CD4-positive, alpha-beta memory T cell (primary cell): ENCODE measurements at regions of chr7 and their contacts with region 1.

Region 1: GRCh38 chr7:2709553-2710285 is 21.7 kb downstream of the AMZ1 start:
- DNase-seq: peak; percentile 75 to 81 (median 79)
- H3K4me3 ChIP-seq: peak overlapping the region in 1 of 2 donors; percentile 50
- H3K4me3 Mint-ChIP-seq: peak overlapping the region; percentile 69 to 87 (median 78)
- H3K27ac ChIP-seq: peak overlapping the region; percentile 42
- H3K27ac Mint-ChIP-seq: peak overlapping the region in 6 of 7 donors; percentile 86 to 96 (median 90)
- H3K4me1 ChIP-seq: peaks cover 41% of the 10 kb centered on the region
- H3K4me1 Mint-ChIP-seq: peaks cover 19 to 40% (median 27%) of the 10 kb centered on the region in 4 donors
- H3K27me3 ChIP-seq: no peaks in the 10 kb centered on the region
- H3K27me3 Mint-ChIP-seq: no peaks in the 10 kb centered on the region

Region 2: DNA sequence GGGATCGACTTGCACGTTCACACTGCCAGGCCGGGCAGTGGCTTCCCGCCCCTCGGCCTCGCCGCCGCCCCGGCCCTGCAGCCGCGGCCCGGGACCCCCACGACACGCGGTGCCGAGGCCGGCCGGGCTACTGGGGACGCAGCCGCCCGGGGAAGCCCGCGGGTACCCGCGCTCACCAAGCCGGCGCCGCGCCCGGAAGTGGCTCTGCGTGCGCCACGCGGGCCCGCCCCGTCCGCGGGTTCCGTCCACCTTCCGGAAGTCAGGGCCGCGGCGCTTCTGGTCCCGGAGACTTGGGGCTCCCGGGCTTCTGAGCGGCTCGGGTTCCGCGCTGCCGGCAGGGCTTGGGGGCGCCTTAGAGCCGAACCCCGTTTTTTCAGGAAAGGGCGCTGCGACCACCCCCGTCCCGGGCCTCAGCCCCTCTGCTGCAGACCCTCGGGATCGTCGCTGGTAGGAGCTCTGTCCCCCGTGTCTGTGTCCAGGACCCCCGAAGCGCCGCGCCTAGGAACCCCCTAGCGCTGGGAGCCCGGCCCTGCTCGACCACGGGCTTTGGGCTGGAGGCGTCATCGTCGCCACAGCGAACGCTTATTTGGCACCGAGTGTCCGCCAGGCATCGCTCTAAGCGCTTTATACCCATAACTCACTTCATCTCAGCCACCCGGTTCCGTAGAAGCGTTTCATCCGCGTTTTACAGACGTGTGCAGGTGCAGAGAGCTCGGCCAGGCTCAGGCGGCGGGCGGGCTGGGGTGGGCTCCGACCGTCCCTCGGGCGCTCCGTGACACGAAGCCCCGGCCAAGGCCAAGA is 1139.7 kb before region 1 on chr7 and contains the start of gene PSMG3:
- CTCF ChIA-PET with region 1: no interaction called
- POLR2A ChIA-PET with region 1: no interaction called
- intact Hi-C with region 1: loop called (anchors 10 kb)
- DNase-seq: peak; percentile 83 to 87 (median 85)
- H3K4me3 ChIP-seq: peak within 1 kb of the TSS; percentile 60 to 76
- H3K4me3 Mint-ChIP-seq: peak within 1 kb of the TSS; percentile 86 to 91 (median 88)
- H3K27ac ChIP-seq: peak within 1 kb of the TSS; percentile 77
- H3K27ac Mint-ChIP-seq: peak within 1 kb of the TSS; percentile 87 to 97 (median 94)
- H3K4me1 ChIP-seq: peaks cover 20% of the 10 kb centered on the region
- H3K4me1 Mint-ChIP-seq: peaks cover 11 to 40% (median 21%) of the 10 kb centered on the region in 4 donors
- H3K27me3 ChIP-seq: no peaks in the 10 kb centered on the region
- H3K27me3 Mint-ChIP-seq: no peaks in the 10 kb centered on the region
- total RNA-seq, gene PSMG3: 19.3 to 22.2 TPM

Region 3: GRCh38 chr7:2508327-2509215 is 201.1 kb before region 1 on chr7:
- CTCF ChIA-PET with region 1: no interaction called
- POLR2A ChIA-PET with region 1: interaction called, 13 read pairs
- intact Hi-C with region 1: no loop called
- DNase-seq: peak; percentile 85 to 96 (median 90)
- H3K4me3 ChIP-seq: peak overlapping the region; percentile 31 to 39
- H3K4me3 Mint-ChIP-seq: peak overlapping the region; percentile 74 to 87 (median 81)
- H3K27ac ChIP-seq: peak overlapping the region; percentile 73
- H3K27ac Mint-ChIP-seq: peak overlapping the region; percentile 95 to 99 (median 98)
- H3K4me1 ChIP-seq: peaks cover 61% of the 10 kb centered on the region
- H3K4me1 Mint-ChIP-seq: peaks cover 29 to 63% (median 50%) of the 10 kb centered on the region in 4 donors
- H3K27me3 ChIP-seq: no peaks in the 10 kb centered on the region
- H3K27me3 Mint-ChIP-seq: no peaks in the 10 kb centered on the region

Region 4: DNA sequence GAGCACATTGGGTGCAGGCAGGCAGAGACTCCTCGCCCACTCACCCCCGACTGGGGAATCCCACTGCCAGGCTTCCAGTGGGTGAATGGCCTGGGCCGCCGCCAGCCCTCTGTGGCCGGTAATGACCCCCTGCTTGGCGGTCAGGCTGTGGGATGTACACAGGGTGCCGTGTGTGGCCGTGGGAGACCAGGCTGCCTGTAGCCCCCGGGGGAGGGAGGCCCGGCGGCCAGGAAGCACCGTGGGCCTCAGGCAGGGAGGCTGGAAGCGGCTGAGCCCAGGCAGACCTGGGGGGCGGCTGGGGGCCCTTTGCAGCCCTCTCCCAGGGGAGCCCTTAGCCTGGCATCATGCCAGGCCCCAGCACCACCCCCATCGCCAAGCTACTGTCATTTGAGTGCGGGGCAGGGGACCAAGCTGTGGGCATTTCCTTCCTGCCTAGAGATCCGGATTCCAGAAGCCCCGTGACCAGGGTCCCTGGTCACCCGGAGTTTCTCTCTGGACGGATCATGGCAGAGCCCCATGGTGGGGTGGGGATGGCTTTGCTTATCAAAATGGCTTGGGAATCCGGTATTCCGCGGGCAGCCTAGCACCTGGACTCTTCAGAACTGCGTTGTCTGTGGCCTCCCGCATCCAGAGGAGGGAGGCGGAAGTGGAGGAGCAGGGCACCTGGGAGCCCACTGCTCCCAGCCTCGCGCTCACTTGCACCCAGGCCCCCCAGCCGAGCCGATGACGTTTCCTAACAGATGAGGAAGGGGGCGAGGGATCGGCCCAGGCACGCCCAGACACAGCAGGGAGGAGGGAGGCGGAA is 76.8 kb before region 1 on chr7:
- CTCF ChIA-PET with region 1: interaction called, 3 read pairs
- POLR2A ChIA-PET with region 1: interaction called, 13 read pairs
- intact Hi-C with region 1: no loop called
- DNase-seq: peak in 4 of 5 donors; percentile 15 to 19 (median 18)
- H3K4me3 ChIP-seq: peak overlapping the region; percentile 52 to 82
- H3K4me3 Mint-ChIP-seq: peak overlapping the region; percentile 81 to 89 (median 84)
- H3K27ac ChIP-seq: peak overlapping the region; percentile 63
- H3K27ac Mint-ChIP-seq: peak overlapping the region; percentile 44 to 82 (median 75)
- H3K4me1 ChIP-seq: peaks cover 27% of the 10 kb centered on the region
- H3K4me1 Mint-ChIP-seq: peaks cover 2 to 21% (median 15%) of the 10 kb centered on the region in 4 donors
- H3K27me3 ChIP-seq: no peaks in the 10 kb centered on the region
- H3K27me3 Mint-ChIP-seq: peaks cover 0 to under 1% of the 10 kb centered on the region in 2 donors

Region 5: DNA sequence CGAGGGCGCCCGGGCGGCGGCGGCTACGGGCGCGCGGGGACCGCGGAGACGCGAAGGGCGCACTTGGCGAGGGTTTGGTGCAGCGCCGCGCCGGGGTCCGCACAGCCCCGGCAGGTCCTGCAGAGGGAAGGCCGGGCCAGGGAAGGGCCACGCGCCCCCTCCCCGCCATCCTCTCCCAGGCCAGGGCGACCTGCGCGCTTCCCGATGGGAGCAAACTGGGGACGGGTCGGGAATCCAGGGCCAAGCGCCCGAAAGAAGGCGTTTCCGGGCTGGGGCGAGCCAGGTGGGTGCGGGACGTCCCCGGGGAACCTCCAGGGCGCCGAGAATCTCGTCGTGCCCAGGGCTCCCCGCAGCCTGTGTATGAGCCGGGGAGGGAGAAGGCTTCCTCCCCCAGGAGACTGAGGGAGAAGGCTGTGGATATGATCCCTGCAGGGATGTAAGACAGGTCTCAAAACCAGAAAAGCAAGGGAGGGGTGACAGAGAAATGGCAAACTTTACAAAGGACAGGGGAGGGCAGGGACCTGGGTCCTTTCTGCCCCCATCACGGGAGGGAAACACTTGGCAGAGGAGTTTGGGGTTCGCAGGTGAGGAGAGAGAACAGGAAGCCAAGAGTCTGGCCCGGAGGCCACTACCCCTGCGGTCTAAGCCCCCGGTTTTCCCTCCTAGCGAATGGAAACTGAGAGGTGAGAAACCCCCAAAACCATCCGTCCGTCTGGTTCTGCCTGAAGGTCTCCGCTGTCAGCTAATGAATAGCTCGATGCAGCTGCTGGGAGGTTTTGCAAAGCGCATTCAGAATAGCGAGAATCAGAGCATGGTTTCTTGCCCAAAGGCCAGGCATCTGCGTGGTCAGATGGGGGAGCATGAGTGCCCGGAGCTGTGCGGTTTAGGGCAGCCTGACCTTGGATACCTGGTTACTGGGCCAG is 21.0 kb before region 1 on chr7:
- CTCF ChIA-PET with region 1: interaction called, 18 read pairs
- POLR2A ChIA-PET with region 1: no interaction called
- intact Hi-C with region 1: no loop called
- DNase-seq: no peak
- H3K4me3 ChIP-seq: no peak overlapping the region
- H3K4me3 Mint-ChIP-seq: peak overlapping the region in 4 of 8 donors; percentile 32 to 64 (median 46)
- H3K27ac ChIP-seq: no peak overlapping the region
- H3K27ac Mint-ChIP-seq: no peak overlapping the region
- H3K4me1 ChIP-seq: peaks cover 6% of the 10 kb centered on the region
- H3K4me1 Mint-ChIP-seq: peaks cover 2 to 10% (median 5%) of the 10 kb centered on the region in 4 donors
- H3K27me3 ChIP-seq: peaks cover 11% of the 10 kb centered on the region
- H3K27me3 Mint-ChIP-seq: peaks cover 26 to 28% of the 10 kb centered on the region in 2 donors

Region 6: DNA sequence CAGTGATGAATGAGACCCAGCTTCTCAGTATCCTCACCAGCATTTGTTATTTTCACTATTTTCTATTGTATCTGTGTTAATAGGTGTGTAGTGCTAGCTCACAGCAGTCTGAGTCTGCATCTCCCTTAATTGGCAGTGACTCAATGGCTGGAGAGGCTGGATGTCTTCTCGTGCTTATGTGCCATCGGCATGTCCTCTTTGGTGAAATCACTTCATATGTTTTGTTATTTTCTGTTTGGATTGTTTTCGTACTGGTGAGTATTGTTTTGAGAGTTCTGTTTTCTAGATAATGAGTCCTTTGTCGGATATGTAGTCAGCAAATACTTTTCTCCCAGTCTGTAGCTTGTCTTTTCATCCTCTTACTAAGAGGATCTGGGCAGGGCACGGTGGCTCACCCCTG is 44.4 kb after region 1 on chr7:
- CTCF ChIA-PET with region 1: interaction called, 9 read pairs
- POLR2A ChIA-PET with region 1: interaction called, 7 read pairs
- intact Hi-C with region 1: loop called (anchors 1 kb)
- DNase-seq: no peak
- H3K4me3 ChIP-seq: no peak overlapping the region
- H3K4me3 Mint-ChIP-seq: no peak overlapping the region
- H3K27ac ChIP-seq: no peak overlapping the region
- H3K27ac Mint-ChIP-seq: no peak overlapping the region
- H3K4me1 ChIP-seq: peaks cover 14% of the 10 kb centered on the region
- H3K4me1 Mint-ChIP-seq: peaks cover 15 to 18% (median 16%) of the 10 kb centered on the region in 4 donors
- H3K27me3 ChIP-seq: no peaks in the 10 kb centered on the region
- H3K27me3 Mint-ChIP-seq: no peaks in the 10 kb centered on the region